Activated naive CD8-positive, alpha-beta T cell treated with anti-CD3 and anti-CD28 coated beads, Interleukin-2, amount 10 ng/mL, durations not matched to agents 7 days and 5 days (primary cell): ENCODE measurements at regions of chr1 and their contacts with region 1.

Region 1: GRCh38 chr1:150321826-150322166 is 463 bp downstream of the PRPF3 start:
- DNase-seq: no peak
- ATAC-seq: no peak
- H3K4me3 Mint-ChIP-seq: peak overlapping the region; percentile 98
- H3K27ac Mint-ChIP-seq: peak overlapping the region; percentile 99
- H3K4me1 Mint-ChIP-seq: peaks cover 23% of the 10 kb centered on the region
- H3K27me3 Mint-ChIP-seq: no peaks in the 10 kb centered on the region

Region 2: GRCh38 chr1:150363426-150364230 is 41.8 kb after region 1 on chr1 and contains the start of gene RPRD2:
- POLR2A ChIA-PET with region 1: interaction called, 11 read pairs
- DNase-seq: peak; percentile 92
- ATAC-seq: peak; percentile 95
- H3K4me3 Mint-ChIP-seq: peak within 1 kb of the TSS; percentile 100
- H3K27ac Mint-ChIP-seq: peak within 1 kb of the TSS; percentile 99
- H3K4me1 Mint-ChIP-seq: peaks cover 24% of the 10 kb centered on the region
- H3K27me3 Mint-ChIP-seq: no peaks in the 10 kb centered on the region
- total RNA-seq, gene RPRD2: 42.2 to 42.3 TPM